ENCODE measurements at regions of chr7 and their contacts with region 1.

Region 1: GRCh38 chr7:57487957-57488546 is 38.1 kb downstream of the ZNF716 start:
- DNase-seq: no peak
- ATAC-seq: no peak

Region 2: DNA sequence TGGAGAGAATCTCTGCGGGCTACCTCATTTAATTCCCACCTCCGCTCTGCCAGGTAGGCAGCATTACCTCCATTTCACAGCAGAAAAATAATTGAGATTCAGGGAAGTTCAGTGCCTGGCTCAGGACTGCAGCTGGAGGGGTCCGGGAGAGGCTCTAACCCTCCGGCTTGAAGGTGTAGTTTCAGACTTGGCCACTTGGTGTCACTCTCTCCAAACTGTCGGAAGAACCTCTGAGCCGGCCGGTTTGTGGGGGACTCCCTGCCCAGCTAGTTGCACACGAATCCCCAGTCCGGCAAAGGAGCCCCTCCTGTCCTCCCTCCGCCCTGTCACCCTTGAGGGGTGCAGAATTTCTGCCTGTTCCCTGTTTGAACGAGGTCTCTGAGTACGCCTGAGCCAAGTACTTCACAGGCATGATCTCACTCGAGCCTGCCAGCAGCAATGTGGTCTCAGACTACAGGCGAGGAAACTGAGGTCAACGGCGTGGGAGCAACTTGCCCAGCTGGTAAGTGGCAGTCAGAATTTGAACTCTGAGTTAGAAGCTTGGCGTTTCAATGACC is 182.8 kb before region 1 on chr7:
- intact Hi-C with region 1: loop called (anchors 5 kb)
- DNase-seq: no peak
- ATAC-seq: peak; percentile 56

Measured in left ventricle myocardium superior (tissue), 1 donor.